ENCODE measurements at regions of chr2 and their contacts with region 1.

Region 1: GRCh38 chr2:104102615-104103014 is 751.3 kb upstream of the POU3F3 start:
- DNase-seq: peak; percentile 62
- H3K4me3 ChIP-seq: peak overlapping the region; percentile 22
- H3K27ac ChIP-seq: peak overlapping the region; percentile 58
- H3K4me1 ChIP-seq: peaks cover 58% of the 10 kb centered on the region
- CTCF ChIP-seq: no peak

Region 2: DNA sequence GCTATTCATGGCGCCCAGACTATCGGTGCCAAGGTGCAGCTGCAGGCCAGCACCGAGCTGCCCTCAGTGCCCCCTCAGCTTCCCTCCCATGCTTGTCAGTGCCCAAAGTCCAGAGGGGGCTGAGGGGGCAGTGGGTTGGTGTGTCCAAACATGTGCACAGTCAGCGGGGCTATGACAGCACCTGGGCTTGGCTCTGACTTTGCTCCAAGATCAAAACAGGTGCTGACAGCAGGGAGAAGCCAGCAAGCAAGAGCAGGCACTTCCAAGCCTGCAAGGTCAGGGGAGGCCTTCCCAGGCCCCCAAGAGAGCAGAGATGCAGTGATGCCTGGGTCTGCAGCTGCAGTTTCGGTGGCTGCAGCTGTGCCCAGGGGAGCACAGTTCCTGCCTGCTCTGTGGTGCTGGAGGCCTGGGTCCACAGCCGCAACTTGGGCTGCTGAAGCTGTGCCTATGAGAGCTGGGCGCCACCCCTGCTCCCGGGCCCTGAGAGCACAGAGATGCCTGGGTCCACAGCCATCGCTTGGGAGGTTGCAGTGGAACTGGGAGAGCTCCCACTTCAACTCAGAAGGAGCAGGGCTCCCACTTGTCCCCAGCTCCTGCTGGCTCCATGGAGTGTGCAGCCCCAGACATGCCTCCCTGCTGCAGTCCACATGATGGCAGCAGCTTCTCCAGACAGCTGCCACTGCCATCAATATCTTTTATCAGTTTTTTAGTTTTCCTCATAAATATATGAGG is 24.0 kb before region 1 on chr2:
- CTCF ChIA-PET with region 1: no interaction called
- POLR2A ChIA-PET with region 1: interaction called, 4 read pairs
- intact Hi-C with region 1: loop called (anchors 2 kb)
- DNase-seq: peak; percentile 83
- H3K4me3 ChIP-seq: no peak overlapping the region
- H3K27ac ChIP-seq: peak overlapping the region; percentile 80
- H3K4me1 ChIP-seq: peaks cover 19% of the 10 kb centered on the region
- CTCF ChIP-seq: peak; percentile 68

Measured in OCI-LY7 (cell line).